Cardiac septum (tissue), 1 donor: ENCODE measurements at regions of chr19 and their contacts with region 1.

Region 1: DNA sequence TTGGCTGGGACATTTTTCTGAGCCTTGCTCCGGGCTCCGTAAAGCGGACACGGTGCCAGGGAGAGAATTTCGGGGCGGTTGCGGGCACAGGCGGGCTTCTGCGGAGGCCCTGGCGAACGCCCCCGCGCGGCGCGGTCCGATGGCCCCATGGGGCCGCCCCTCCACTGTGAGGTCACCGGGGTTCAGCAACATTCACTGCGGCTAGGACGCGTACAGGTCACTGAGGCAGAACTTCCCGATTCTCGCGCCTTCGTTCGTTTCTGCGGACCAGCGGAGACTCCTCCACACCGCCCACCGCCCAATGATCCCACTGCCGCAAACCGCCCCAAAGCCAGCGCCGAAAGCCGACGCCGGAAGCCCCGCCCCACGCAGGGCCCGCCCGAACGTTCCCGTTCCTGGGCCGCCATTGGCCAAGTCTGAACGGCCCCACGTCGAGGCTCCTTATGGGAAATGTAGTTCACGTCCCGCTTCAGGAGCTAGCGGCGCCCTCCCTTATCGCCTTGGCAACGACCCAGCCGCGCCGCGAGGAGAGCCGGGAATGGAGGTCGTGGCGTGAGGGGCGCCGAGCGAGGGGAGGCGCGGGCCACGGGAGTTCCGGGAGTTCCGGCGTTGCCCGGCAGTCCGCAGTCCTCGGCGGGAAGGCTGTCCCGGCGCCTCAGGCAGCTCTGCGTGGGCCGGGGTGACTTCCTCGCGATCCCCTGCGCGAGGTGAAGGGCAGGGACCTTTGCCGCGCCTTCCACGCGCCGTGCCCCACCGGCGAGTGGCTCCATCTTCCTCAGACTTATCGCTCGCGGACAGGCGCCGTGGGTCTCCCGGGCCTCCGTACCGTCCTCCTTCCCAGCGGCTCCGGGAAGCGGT is at the start of gene ZNF584:
- DNase-seq: peak; percentile 98
- total RNA-seq, gene ZNF584: 19.8 TPM

Region 2: DNA sequence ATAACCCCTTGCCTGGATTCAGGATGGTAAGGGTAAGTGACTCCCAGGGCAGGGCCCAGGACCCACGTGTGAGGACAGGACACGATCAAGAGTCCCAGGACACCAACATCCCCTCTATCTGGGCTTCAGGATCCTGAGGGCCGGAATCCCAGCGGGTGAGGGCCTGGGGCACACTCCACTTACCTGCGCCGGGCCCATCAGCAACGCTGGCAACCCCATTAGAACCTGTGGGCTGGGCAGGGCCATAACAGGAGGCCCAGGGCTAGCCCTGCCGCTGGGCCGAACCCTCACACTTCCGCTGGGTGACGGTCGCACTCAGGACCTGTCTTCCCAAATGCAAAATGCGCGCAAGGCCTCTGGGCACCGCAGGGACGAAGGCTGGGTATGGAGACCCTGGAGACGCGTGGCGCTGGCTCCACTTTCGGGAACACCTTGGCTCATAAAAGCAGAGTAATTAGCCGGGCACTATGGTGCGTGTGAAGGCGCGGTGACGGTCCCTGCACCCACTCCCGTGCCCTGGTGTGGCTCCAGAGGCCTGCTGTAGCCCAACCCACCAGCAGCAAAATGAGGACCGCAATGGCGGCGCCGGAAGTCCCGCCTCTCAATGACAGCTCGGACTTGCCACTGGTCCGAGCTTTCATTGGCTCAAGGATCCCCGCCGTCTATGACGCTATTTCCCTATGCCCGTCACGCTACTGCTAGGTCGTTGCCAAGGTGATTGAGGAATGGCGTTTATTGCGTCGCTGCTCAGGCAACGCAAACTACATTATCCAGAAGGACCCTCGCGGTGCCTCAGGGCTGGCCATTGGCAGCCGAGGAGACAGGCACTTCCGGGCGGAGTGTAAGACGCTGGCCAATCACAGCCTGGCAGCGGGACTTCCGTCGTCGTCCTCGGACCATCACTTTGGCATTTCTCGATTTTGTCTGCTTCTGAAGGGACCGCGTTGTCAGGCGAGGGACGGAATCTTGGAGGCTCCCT is 31.5 kb after region 1 on chr19 and contains the start of gene ZNF132:
- intact Hi-C with region 1: loop called (anchors 1 kb)
- DNase-seq: peak; percentile 97
- total RNA-seq, gene ZNF132: 5.4 TPM